ENCODE measurements at regions of chr9 and their contacts with region 1.

Region 1: DNA sequence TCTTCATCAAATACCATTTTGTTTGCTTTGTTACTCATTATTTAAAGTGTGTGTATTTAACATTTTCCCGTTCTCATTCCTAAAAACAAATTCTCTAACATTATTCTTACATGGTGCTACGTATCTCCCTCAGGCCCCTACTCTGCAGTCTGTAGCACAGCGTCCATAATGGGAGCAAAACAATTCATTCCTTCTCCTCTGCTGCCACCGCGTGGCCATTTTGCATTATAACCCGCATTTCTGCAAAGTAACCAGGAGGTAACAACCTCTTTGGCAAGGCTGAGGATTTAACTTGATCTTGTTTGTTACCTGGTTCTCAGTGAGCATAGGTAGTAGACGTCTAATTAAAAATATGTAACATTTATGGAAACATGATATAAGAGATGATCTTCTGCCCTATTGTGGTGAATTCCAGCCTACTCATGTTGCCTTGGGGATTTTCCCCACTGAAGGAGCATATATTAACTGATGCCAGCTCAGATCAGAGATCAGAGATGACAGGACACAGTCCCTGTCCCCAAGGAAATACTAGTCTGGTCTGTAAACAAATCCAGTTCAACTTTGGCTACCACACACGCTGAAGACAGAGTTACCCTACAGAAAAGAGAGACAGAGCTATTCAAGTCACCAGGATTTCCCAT is 10.5 kb downstream of the OR1K1 start:
- DNase-seq: peak; percentile 83
- ATAC-seq: peak; percentile 67
- H3K4me3 Mint-ChIP-seq: no peak overlapping the region
- H3K27ac Mint-ChIP-seq: no peak overlapping the region
- H3K4me1 Mint-ChIP-seq: peaks cover 30% of the 10 kb centered on the region
- H3K27me3 Mint-ChIP-seq: no peaks in the 10 kb centered on the region

Region 2: GRCh38 chr9:122350638-122351355 is 459.6 kb before region 1 on chr9:
- CTCF ChIA-PET with region 1: interaction called, 10 read pairs
- DNase-seq: peak; percentile 86
- ATAC-seq: peak; percentile 88
- H3K4me3 Mint-ChIP-seq: no peak overlapping the region
- H3K27ac Mint-ChIP-seq: no peak overlapping the region
- H3K4me1 Mint-ChIP-seq: peaks cover 26% of the 10 kb centered on the region
- H3K27me3 Mint-ChIP-seq: peaks cover 25% of the 10 kb centered on the region

Region 3: DNA sequence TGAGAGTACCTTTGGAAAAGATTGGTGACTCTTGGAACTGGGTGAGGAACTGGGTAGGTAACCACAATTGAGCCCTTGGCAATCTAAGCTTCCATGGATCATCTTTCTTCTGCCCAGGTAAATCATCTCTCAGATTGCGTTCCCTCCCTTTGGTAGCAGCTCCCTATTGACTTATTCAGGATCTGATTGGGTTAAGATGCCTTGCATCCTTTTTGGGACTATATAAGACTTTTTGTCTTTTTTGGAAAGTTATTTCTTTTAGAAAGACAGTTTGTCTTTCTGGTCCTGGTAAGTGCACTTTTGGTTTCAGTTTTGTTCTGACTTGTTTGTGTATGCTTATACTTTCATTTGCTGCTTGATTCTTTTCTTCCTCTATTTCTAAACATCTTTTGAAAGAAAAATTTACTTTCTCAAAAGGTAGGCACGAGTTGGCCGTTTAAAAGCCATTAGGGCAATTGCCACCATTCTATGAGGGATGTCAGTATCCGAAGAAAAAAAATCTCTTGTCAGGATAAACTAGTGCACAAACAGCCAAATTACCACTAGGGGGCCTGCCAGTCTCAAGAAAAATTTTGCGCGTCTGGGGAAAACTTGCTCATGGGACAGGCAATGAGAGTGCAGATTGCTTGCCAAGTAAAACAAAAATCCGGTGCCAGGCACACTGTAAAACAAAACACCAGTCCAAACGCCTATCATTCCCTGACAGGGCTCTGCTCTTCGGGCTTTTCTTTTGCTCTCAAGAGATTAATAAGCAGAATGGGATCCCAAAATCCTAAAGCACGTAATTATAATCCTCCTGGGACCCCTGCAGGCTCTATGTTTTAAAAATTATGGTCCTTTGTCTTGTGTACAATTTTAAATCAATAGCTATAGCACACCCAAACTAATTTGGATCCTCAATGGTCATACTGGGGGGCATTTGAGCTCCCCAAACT is 345.5 kb before region 1 on chr9:
- CTCF ChIA-PET with region 1: interaction called, 17 read pairs
- DNase-seq: peak; percentile 80
- ATAC-seq: peak; percentile 84
- H3K4me3 Mint-ChIP-seq: peak overlapping the region; percentile 83
- H3K27ac Mint-ChIP-seq: peak overlapping the region; percentile 91
- H3K4me1 Mint-ChIP-seq: peaks cover 14% of the 10 kb centered on the region
- H3K27me3 Mint-ChIP-seq: peaks cover 42% of the 10 kb centered on the region

Region 4: GRCh38 chr9:122498883-122499288 is 311.5 kb before region 1 on chr9:
- CTCF ChIA-PET with region 1: interaction called, 15 read pairs
- DNase-seq: peak; percentile 49
- ATAC-seq: peak; percentile 64
- H3K4me3 Mint-ChIP-seq: no peak overlapping the region
- H3K27ac Mint-ChIP-seq: no peak overlapping the region
- H3K4me1 Mint-ChIP-seq: no peaks in the 10 kb centered on the region
- H3K27me3 Mint-ChIP-seq: peaks cover 28% of the 10 kb centered on the region

Region 5: DNA sequence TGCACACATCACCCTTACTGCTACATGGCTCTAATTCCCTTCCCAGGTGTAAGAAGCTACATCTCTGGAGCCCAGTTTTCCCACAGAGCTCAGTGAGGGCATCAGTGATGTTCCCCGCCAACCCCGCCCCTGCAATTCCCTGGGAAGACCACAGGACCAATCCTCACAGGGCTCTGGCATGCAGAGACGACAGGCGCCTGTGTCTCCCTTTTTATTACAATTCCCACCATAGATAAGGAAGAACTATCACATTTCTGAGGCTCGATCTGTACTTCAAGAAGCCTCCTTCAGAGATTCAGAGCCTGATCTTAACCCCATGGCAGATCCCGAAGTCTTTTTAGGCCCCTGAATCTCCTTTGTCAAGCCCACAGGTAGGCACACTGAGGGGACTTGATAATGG is 68.4 kb before region 1 on chr9 and contains the start of gene OR1L6:
- CTCF ChIA-PET with region 1: no interaction called
- DNase-seq: no peak
- ATAC-seq: no peak
- H3K4me3 Mint-ChIP-seq: no peak within 1 kb of the TSS
- H3K27ac Mint-ChIP-seq: no peak within 1 kb of the TSS
- H3K4me1 Mint-ChIP-seq: no peaks in the 10 kb centered on the region
- H3K27me3 Mint-ChIP-seq: peaks cover 2% of the 10 kb centered on the region
- total RNA-seq, gene OR1L6: not detected